ENCODE measurements at regions of chr22 and their contacts with region 1.

Region 1: DNA sequence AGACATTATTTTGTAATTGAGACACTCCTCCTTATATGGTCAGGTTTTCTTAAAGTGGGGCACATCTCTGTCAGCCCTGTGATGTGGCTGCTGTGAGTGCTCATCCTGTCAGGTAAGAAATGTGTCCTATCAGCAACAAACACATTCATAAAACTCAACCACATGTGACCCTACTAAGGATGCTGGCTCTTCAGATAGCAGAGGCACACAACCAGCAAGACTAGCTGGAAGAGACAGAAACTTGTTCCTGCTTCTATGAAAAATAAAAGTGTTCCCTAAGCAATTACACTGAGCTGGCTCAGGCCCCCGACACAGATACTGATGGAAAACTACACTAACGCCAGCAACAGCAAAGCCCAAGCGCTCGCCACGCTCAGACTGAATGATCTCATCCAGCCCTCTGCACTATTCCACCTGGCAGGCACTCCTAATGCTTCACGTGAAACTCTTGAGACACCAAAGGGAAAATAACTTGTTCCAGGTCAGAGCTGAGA is 49.8 kb upstream of the CYP2D6 start:
- DNase-seq: peak in 34 of 35 experiments; percentile 29 to 83 (median 54)
- ATAC-seq: peak; percentile 96 to 99 (median 98)
- H3K4me3 ChIP-seq: no peak overlapping the region
- H3K4me3 Mint-ChIP-seq: peak overlapping the region; percentile 19 to 62 (median 53)
- H3K27ac ChIP-seq: peak overlapping the region; percentile 70
- H3K27ac Mint-ChIP-seq: peak overlapping the region; percentile 84 to 90
- H3K4me1 ChIP-seq: peaks cover 22 to 55% of the 10 kb centered on the region in 2 experiments
- H3K4me1 Mint-ChIP-seq: peaks cover 70 to 87% (median 84%) of the 10 kb centered on the region in 3 donors
- H3K27me3 ChIP-seq: no peaks in the 10 kb centered on the region
- H3K27me3 Mint-ChIP-seq: no peaks in the 10 kb centered on the region

Region 2: GRCh38 chr22:41576877-41577276 is 603.5 kb before region 1 on chr22:
- CTCF ChIA-PET with region 1: no interaction called
- POLR2A ChIA-PET with region 1: interaction called in 1 of 2 experiments, 13 read pairs
- DNase-seq: peak in 23 of 35 experiments; percentile 6 to 46 (median 21)
- ATAC-seq: peak in 3 of 4 experiments; percentile 47 to 62 (median 48)
- H3K4me3 ChIP-seq: no peak overlapping the region
- H3K4me3 Mint-ChIP-seq: no peak overlapping the region
- H3K27ac ChIP-seq: no peak overlapping the region
- H3K27ac Mint-ChIP-seq: no peak overlapping the region
- H3K4me1 ChIP-seq: peaks cover 0 to 4% of the 10 kb centered on the region in 2 experiments
- H3K4me1 Mint-ChIP-seq: no peaks in the 10 kb centered on the region
- H3K27me3 ChIP-seq: no peaks in the 10 kb centered on the region
- H3K27me3 Mint-ChIP-seq: no peaks in the 10 kb centered on the region

Region 3: DNA sequence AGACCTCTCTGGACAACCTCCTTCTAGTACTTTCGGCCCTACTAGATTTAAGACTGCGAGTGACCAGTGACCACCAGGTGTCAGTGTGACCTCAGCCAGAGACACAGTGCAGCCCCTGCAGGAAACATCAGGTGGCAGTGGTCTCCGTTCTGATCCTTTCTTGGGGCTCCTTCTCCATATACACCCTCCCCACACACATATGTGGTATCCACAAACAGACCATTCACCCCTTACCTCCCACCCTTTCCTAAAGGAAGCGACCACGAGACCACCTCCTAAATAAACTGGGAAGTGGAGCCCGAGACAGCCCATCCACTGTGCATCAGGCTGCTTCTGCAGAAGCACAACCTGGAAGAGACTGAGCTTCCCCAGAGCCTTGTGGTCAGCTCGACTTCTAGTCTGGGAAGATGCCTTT is 11.3 kb before region 1 on chr22:
- CTCF ChIA-PET with region 1: no interaction called
- POLR2A ChIA-PET with region 1: no interaction called
- DNase-seq: peak; percentile 42 to 84 (median 66)
- ATAC-seq: peak; percentile 69 to 91 (median 78)
- H3K4me3 ChIP-seq: no peak overlapping the region
- H3K4me3 Mint-ChIP-seq: no peak overlapping the region
- H3K27ac ChIP-seq: no peak overlapping the region
- H3K27ac Mint-ChIP-seq: no peak overlapping the region
- H3K4me1 ChIP-seq: peaks cover 0 to 21% of the 10 kb centered on the region in 2 experiments
- H3K4me1 Mint-ChIP-seq: peaks cover 29 to 38% (median 30%) of the 10 kb centered on the region in 3 donors
- H3K27me3 ChIP-seq: no peaks in the 10 kb centered on the region
- H3K27me3 Mint-ChIP-seq: no peaks in the 10 kb centered on the region

Region 4: GRCh38 chr22:42208362-42208761 is 28.0 kb after region 1 on chr22:
- CTCF ChIA-PET with region 1: interaction called in 1 of 2 experiments, 5 read pairs
- POLR2A ChIA-PET with region 1: interaction called in 1 of 2 experiments, 24 read pairs
- DNase-seq: no peak
- ATAC-seq: peak in 1 of 4 experiments; percentile 5
- H3K4me3 ChIP-seq: no peak overlapping the region
- H3K4me3 Mint-ChIP-seq: peak overlapping the region; percentile 19 to 60 (median 32)
- H3K27ac ChIP-seq: peak overlapping the region; percentile 26
- H3K27ac Mint-ChIP-seq: peak overlapping the region; percentile 54 to 80
- H3K4me1 ChIP-seq: peaks cover 0 to 30% of the 10 kb centered on the region in 2 experiments
- H3K4me1 Mint-ChIP-seq: peaks cover 64 to 67% (median 65%) of the 10 kb centered on the region in 3 donors
- H3K27me3 ChIP-seq: no peaks in the 10 kb centered on the region
- H3K27me3 Mint-ChIP-seq: no peaks in the 10 kb centered on the region

Measured in T-cell (primary cell).